RWPE1 (cell line): ENCODE measurements at regions of chr2 and their contacts with region 1.

Region 1: DNA sequence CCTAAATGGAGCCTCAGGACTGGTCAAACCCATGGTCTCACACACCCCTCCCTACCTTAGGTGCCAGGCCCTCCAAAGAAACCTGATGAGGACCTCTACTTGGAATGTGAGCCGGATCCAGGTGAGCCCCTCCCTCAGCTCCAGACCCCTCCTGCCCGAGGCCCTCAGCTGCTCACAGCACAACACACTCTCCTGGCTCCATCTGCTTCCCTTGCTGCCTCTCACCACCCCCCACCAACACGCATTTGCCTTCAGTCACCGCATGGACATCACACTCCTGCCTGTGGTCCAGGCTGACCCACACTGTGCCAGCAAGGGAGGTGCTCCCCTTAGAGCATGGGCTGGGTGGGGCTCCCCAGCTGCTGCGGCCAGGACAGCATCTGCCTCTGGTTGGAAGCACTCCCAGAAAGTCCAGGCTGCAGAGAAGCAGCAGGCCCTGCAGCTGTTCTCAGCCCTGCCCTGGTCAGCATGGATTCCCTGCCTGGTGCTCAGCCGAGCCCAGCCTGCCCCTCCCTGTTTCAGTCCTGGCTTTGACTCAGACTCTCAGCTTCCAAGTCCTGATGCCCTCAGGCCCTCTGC is 15.1 kb downstream of the SH2D6 start:
- DNase-seq: peak; percentile 82
- H3K27ac ChIP-seq: peak overlapping the region; percentile 96
- CTCF ChIP-seq: no peak

Region 2: GRCh38 chr2:85538486-85539360 is 105.1 kb after region 1 on chr2 and contains the start of gene MAT2A:
- CTCF ChIA-PET with region 1: interaction called, 7 read pairs
- POLR2A ChIA-PET with region 1: interaction called, 10 read pairs
- DNase-seq: peak; percentile 87
- H3K27ac ChIP-seq: peak within 1 kb of the TSS; percentile 98
- CTCF ChIP-seq: peak; percentile 80